Mammary epithelial cell (primary cell): ENCODE measurements at regions of chr6 and their contacts with region 1.

Region 1: DNA sequence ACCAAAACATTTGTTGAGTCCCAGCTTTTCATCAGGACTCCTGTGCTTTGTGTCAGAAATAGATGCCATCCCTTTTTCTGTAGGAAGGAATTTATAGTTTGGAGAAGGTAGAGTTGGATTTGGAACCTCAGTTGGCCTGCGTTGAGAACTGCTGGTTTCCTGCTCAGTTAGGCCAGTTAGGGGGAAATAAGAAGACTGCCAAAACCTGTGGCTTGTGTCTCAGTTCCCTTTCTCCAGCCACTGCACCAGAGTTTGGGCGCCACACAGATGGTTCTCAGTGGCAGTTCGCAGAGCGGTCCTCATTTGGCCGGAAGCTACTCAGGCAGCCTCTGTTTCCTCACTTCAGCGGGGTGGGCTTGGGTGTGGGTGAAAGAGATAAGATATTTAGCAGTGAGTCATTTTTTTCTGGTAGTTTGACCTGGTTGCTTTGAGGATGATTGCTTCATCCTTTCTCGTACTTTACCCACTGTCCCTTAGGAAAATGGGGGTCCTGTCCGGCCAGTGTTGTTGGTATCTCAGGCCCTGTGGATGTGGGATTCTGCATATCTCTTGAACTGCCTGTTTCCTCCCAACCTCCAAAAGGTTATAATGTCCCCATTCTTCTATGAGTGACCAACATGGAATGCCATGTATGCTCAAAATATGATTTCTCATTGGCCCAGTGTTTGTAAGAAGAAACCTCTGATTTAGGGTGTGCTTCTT is 53.7 kb downstream of the JARID2 start:
- DNase-seq: no peak
- H3K4me3 ChIP-seq: no peak overlapping the region
- H3K27ac ChIP-seq: no peak overlapping the region
- H3K4me1 ChIP-seq: peaks cover 9% of the 10 kb centered on the region
- H3K27me3 ChIP-seq: no peaks in the 10 kb centered on the region
- CTCF ChIP-seq: no peak

Region 2: GRCh38 chr6:13778028-13778427 is 1521.6 kb before region 1 on chr6:
- CTCF ChIA-PET with region 1: no interaction called
- dilution Hi-C with region 1: no loop called
- in situ Hi-C with region 1: no loop called
- intact Hi-C with region 1: no loop called
- DNase-seq: no peak
- H3K4me3 ChIP-seq: no peak overlapping the region
- H3K27ac ChIP-seq: no peak overlapping the region
- H3K4me1 ChIP-seq: peaks cover 3% of the 10 kb centered on the region
- H3K27me3 ChIP-seq: no peaks in the 10 kb centered on the region
- CTCF ChIP-seq: no peak

Region 3: DNA sequence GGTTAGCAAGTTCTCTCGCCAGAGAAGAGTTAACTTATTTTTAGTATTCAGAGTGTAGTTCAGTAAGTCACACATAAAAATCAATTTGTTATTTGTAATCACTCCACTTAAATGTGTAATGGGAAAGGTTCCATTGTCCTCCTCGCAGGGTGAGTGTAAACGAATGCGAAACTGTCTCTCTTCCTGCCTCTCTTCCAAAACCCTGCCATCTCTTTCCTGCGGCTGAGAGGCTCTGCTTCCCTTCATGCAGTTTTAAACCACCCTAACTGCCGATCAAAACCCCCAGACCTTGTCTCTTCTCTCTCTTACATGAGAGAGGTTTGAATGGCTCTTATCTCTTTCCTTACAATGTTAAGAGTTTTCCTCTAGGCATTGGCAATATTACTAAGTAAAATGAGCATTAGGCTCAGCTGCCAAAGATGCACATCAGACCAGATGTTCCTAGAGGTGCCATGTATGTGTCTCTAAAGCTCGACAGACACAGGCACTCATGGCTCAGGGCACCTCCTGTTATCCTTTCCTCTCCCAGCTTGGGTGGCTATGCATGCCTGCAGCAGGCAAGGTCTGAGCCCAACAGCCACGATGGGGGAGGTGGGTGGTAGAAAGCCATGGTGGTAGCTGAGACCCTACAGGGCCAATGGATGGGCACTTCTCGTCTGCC is 37.4 kb after region 1 on chr6:
- CTCF ChIA-PET with region 1: no interaction called
- dilution Hi-C with region 1: no loop called
- in situ Hi-C with region 1: no loop called
- intact Hi-C with region 1: loop called (anchors 1 kb)
- DNase-seq: no peak
- H3K4me3 ChIP-seq: no peak overlapping the region
- H3K27ac ChIP-seq: no peak overlapping the region
- H3K4me1 ChIP-seq: peaks cover 12% of the 10 kb centered on the region
- H3K27me3 ChIP-seq: no peaks in the 10 kb centered on the region
- CTCF ChIP-seq: no peak

Region 4: GRCh38 chr6:15358579-15359327 is 59.2 kb after region 1 on chr6:
- CTCF ChIA-PET with region 1: no interaction called
- dilution Hi-C with region 1: loop called (anchors 5 kb)
- in situ Hi-C with region 1: no loop called
- intact Hi-C with region 1: no loop called
- DNase-seq: no peak
- H3K4me3 ChIP-seq: no peak overlapping the region
- H3K27ac ChIP-seq: no peak overlapping the region
- H3K4me1 ChIP-seq: no peaks in the 10 kb centered on the region
- H3K27me3 ChIP-seq: no peaks in the 10 kb centered on the region
- CTCF ChIP-seq: no peak